Adrenal gland (tissue), 19 donors: ENCODE measurements at regions of chr1 and their contacts with region 1.

Region 1: GRCh38 chr1:33295450-33296081 is 25.3 kb downstream of the A3GALT2 start:
- DNase-seq: peak; percentile 82 to 94 (median 87)
- H3K4me3 ChIP-seq: no peak overlapping the region
- H3K27ac ChIP-seq: peak overlapping the region in 2 of 5 donors; percentile 21 to 46
- H3K4me1 ChIP-seq: peaks cover 0 to 13% of the 10 kb centered on the region in 2 donors
- H3K27me3 ChIP-seq: no peaks in the 10 kb centered on the region
- CTCF ChIP-seq: peak; percentile 94 to 99 (median 96)
- POLR2A ChIP-seq: no peak

Region 2: GRCh38 chr1:33127001-33127791 is 168.4 kb before region 1 on chr1:
- intact Hi-C with region 1: no loop called
- DNase-seq: peak; percentile 97 to 100 (median 99)
- H3K4me3 ChIP-seq: peak overlapping the region; percentile 56 to 79 (median 62)
- H3K27ac ChIP-seq: peak overlapping the region; percentile 8 to 91 (median 84)
- H3K4me1 ChIP-seq: peaks cover 0 to 16% of the 10 kb centered on the region in 2 donors
- H3K27me3 ChIP-seq: no peaks in the 10 kb centered on the region
- CTCF ChIP-seq: peak; percentile 80 to 97 (median 86)
- POLR2A ChIP-seq: peak in 1 of 2 donors; percentile 79

Region 3: GRCh38 chr1:33219881-33220661 is 75.5 kb before region 1 on chr1:
- intact Hi-C with region 1: loop called (anchors 5 to 10 kb)
- DNase-seq: no peak
- H3K4me3 ChIP-seq: no peak overlapping the region
- H3K27ac ChIP-seq: peak overlapping the region in 1 of 5 donors; percentile 7
- H3K4me1 ChIP-seq: no peaks in the 10 kb centered on the region
- H3K27me3 ChIP-seq: no peaks in the 10 kb centered on the region
- CTCF ChIP-seq: no peak
- POLR2A ChIP-seq: no peak

Region 4: GRCh38 chr1:33228935-33229487 is 66.6 kb before region 1 on chr1:
- intact Hi-C with region 1: loop called in 1 of 2 experiments (anchors 10 kb)
- DNase-seq: peak; percentile 57 to 86 (median 82)
- H3K4me3 ChIP-seq: no peak overlapping the region
- H3K27ac ChIP-seq: peak overlapping the region in 1 of 5 donors; percentile 67
- H3K4me1 ChIP-seq: peaks cover 0 to 8% of the 10 kb centered on the region in 2 donors
- H3K27me3 ChIP-seq: no peaks in the 10 kb centered on the region
- CTCF ChIP-seq: no peak
- POLR2A ChIP-seq: no peak

Region 5: GRCh38 chr1:33256335-33256700 is 39.2 kb before region 1 on chr1 and contains the start of gene ZNF362:
- intact Hi-C with region 1: no loop called
- DNase-seq: peak; percentile 41 to 76 (median 66)
- H3K4me3 ChIP-seq: peak within 1 kb of the TSS; percentile 47 to 85 (median 64)
- H3K27ac ChIP-seq: peak within 1 kb of the TSS; percentile 86 to 99 (median 95)
- H3K4me1 ChIP-seq: peaks cover 18 to 40% of the 10 kb centered on the region in 2 donors
- H3K27me3 ChIP-seq: no peaks in the 10 kb centered on the region
- CTCF ChIP-seq: peak in 2 of 6 experiments; percentile 16 to 48
- POLR2A ChIP-seq: peak; percentile 45 to 48
- total RNA-seq, gene ZNF362: 13.4 to 36.7 (median 23.7) TPM

Region 6: DNA sequence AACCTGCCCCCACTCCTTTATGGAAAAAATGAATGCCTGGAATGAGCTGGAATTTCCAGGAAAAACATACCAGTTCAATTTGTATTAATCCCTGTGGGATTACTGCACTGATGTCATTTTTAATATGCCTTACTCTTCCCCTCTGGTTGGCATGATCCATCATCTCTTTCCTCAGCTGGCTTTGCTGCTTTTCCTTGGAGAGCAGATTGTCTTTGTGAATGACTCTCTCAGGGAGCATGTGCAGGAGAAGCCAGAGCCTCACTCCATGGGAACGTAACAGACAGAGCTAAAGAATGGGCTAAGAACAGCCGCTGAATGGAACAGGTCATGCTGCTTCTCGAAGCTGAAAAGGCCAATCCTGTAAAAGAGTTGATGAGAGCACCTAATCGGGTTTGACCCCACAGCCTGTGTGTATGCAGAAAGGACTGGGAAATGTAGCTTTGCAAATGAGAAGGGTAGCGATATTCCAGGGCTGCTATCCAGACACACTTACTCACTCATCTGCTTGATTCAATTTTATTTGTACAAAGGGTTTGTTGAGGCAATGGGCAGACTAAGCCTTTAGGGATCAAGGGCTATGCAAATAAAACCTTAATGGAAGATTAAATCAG is 114.6 kb after region 1 on chr1:
- intact Hi-C with region 1: no loop called
- DNase-seq: no peak
- H3K4me3 ChIP-seq: no peak overlapping the region
- H3K27ac ChIP-seq: peak overlapping the region in 2 of 5 donors; percentile 4 to 46
- H3K4me1 ChIP-seq: peaks cover 4 to 16% of the 10 kb centered on the region in 2 donors
- H3K27me3 ChIP-seq: no peaks in the 10 kb centered on the region
- CTCF ChIP-seq: no peak
- POLR2A ChIP-seq: no peak

Region 7: DNA sequence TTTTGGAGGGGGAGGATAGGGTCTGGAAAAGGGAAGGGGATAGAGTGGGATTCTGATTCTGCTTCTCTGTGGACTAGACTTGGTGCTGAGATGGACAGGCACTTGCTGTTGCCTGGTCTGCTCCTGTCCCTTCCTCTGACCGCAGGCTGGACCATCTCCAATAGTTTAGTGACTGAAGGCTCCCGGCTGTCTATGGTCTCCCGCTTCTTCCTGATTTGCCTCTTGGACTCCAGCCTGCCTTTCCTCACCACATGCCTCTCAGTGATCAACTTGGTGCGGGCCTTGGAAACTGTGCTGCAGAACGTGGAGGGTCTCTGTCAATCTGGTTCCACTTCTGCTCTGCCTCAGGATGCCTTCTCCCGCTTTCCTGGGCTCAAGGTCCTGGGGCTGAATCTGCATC is 170.6 kb after region 1 on chr1:
- intact Hi-C with region 1: loop called in 1 of 2 experiments (anchors 5 kb)
- DNase-seq: peak in 5 of 7 donors; percentile 50 to 73 (median 56)
- H3K4me3 ChIP-seq: no peak overlapping the region
- H3K27ac ChIP-seq: no peak overlapping the region
- H3K4me1 ChIP-seq: peaks cover 0 to 19% of the 10 kb centered on the region in 2 donors
- H3K27me3 ChIP-seq: no peaks in the 10 kb centered on the region
- CTCF ChIP-seq: no peak
- POLR2A ChIP-seq: no peak

Region 8: DNA sequence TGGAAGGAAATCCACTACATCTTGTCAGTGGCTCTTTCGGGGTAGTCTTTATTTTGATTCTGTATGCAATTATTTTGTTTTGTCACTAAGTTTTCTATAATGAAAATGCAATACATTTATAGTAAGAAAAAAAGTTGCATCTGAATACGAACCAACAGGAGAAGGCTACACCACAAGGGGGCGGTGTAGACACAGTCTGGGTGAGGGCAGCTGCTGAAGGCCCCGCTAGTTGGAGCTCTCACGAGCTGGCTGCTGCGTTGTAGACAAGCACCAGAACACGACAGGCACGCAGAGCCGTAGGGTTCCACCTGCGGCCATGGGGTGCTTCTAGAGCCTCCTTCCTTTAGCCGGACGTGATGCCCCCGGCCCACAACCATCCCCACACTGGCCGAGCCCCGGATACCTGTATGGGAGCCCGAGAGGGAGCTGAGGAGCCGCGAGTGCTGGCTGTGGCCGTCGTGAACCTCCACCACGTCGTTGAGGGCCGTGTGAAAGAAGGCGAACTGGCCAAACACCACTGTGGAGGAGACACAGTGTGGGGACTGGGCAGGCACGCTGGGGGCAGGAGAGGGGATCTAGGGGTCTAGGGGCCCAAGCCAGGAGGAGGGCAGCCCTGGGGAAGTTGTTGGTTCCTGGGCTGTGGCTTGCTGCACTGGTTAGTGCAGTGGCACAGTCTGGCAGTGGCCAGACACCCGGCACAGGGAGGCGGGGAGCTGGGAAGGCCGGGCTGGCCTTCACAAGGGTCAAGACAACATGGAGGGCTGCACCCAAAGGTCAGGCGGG is 337.6 kb after region 1 on chr1:
- intact Hi-C with region 1: no loop called
- DNase-seq: peak; percentile 88 to 96 (median 94)
- H3K4me3 ChIP-seq: no peak overlapping the region
- H3K27ac ChIP-seq: no peak overlapping the region
- H3K4me1 ChIP-seq: no peaks in the 10 kb centered on the region
- H3K27me3 ChIP-seq: no peaks in the 10 kb centered on the region
- CTCF ChIP-seq: peak; percentile 83 to 96 (median 86)
- POLR2A ChIP-seq: no peak